GM12878 (cell line): ENCODE measurements at regions of chr7 and their contacts with region 1.

Region 1: DNA sequence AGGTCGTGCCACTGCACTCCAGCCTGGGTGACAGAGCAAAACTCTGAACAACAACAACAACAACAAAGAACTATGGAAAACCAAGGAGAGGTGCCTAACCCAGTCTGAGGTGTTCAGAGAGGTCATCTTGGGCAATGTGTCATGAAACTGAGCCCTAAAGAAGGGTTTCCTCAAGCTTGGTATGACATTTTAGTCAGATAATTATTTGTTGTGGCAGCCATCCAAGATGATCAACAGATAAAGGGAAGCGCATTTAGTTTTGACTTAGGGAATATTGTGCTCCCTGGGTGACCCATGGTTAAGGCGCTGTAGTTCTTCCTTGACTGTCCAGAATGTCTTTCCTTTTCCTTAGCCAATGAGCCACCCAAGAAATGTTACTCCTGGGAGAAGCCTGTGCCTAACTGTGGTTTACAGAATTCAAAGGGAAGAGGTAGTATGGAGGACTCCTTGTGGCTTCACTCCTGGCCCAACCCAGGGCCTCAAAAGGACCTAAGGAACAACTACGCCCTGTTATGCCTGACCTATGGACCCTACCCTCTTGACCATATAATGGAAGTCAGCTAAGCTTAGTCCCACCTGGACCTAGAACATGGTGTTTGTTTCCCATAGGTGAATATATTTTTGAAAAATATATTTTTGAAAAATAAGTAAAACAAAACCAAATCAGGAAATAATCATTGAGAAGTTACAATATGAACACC is 42.4 kb downstream of the TPST1 start:
- DNase-seq: no peak
- ATAC-seq: no peak
- H3K4me3 ChIP-seq: no peak overlapping the region
- H3K27ac ChIP-seq: no peak overlapping the region
- H3K4me1 ChIP-seq: no peaks in the 10 kb centered on the region
- H3K27me3 ChIP-seq: no peaks in the 10 kb centered on the region
- CTCF ChIP-seq: no peak
- EP300 ChIP-seq: no peak
- POLR2A ChIP-seq: no peak
- RAD21 ChIP-seq: no peak

Region 2: GRCh38 chr7:66258409-66258808 is 10.9 kb after region 1 on chr7:
- CTCF ChIA-PET with region 1: no interaction called
- POLR2A ChIA-PET with region 1: interaction called, 4 read pairs
- RAD21 ChIA-PET with region 1: no interaction called
- SMC1A ChIA-PET with region 1: interaction called, 15 read pairs
- in situ Hi-C with region 1: no loop called
- intact Hi-C with region 1: no loop called
- DNase-seq: no peak
- ATAC-seq: no peak
- H3K4me3 ChIP-seq: no peak overlapping the region
- H3K27ac ChIP-seq: no peak overlapping the region
- H3K4me1 ChIP-seq: no peaks in the 10 kb centered on the region
- H3K27me3 ChIP-seq: no peaks in the 10 kb centered on the region
- CTCF ChIP-seq: no peak
- EP300 ChIP-seq: no peak
- POLR2A ChIP-seq: no peak
- RAD21 ChIP-seq: no peak

Region 3: GRCh38 chr7:66281678-66282590 is 34.4 kb after region 1 on chr7:
- CTCF ChIA-PET with region 1: no interaction called
- POLR2A ChIA-PET with region 1: no interaction called
- RAD21 ChIA-PET with region 1: no interaction called
- SMC1A ChIA-PET with region 1: no interaction called
- in situ Hi-C with region 1: no loop called
- intact Hi-C with region 1: no loop called
- DNase-seq: no peak
- ATAC-seq: no peak
- H3K4me3 ChIP-seq: no peak overlapping the region
- H3K27ac ChIP-seq: no peak overlapping the region
- H3K4me1 ChIP-seq: no peaks in the 10 kb centered on the region
- H3K27me3 ChIP-seq: no peaks in the 10 kb centered on the region
- CTCF ChIP-seq: no peak
- EP300 ChIP-seq: no peak
- POLR2A ChIP-seq: no peak
- RAD21 ChIP-seq: no peak